ENCODE measurements at regions of chr10 and their contacts with region 1.

Region 1: GRCh38 chr10:6667679-6668270 is 87.7 kb upstream of the PRKCQ start:
- DNase-seq: peak; percentile 58
- H3K4me3 Mint-ChIP-seq: no peak overlapping the region
- H3K27ac Mint-ChIP-seq: no peak overlapping the region
- H3K4me1 Mint-ChIP-seq: peaks cover 27% of the 10 kb centered on the region
- H3K27me3 Mint-ChIP-seq: peaks cover 7% of the 10 kb centered on the region

Region 2: DNA sequence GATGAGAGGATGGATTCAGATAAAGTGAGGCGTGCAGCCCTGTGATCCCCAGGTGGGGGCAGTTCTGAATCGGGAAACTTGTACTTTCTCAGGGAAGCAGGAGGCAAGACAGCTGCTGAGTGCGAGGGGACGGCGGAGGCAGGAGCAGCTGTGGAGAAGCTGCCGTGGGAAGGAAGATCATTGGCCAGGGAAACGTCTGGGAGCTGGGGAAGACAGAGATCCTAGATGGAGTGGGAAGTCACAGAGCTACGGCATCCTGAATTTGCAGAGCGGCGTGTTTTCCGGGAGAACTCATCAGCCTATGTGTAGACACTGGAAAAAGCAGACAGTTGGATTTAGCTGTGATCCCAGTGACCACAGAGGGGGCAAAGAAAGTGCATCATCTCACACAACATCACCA is 96.9 kb before region 1 on chr10:
- CTCF ChIA-PET with region 1: interaction called, 12 read pairs
- POLR2A ChIA-PET with region 1: no interaction called
- DNase-seq: no peak
- H3K4me3 Mint-ChIP-seq: no peak overlapping the region
- H3K27ac Mint-ChIP-seq: peak overlapping the region; percentile 54
- H3K4me1 Mint-ChIP-seq: peaks cover 83% of the 10 kb centered on the region
- H3K27me3 Mint-ChIP-seq: no peaks in the 10 kb centered on the region